Natural killer cell (primary cell): ENCODE measurements at regions of chr1 and their contacts with region 1.

Region 1: GRCh38 chr1:52141513-52142219 is at the start of gene ZFYVE9:
- DNase-seq: peak; percentile 72 to 88
- ATAC-seq: peak; percentile 78 to 89 (median 86)
- H3K4me3 ChIP-seq: peak within 1 kb of the TSS; percentile 16
- H3K4me3 Mint-ChIP-seq: peak within 1 kb of the TSS; percentile 91
- H3K27ac ChIP-seq: no peak within 1 kb of the TSS
- H3K27ac Mint-ChIP-seq: peak within 1 kb of the TSS in 1 of 2 donors; percentile 60
- H3K4me1 ChIP-seq: peaks cover 10% of the 10 kb centered on the region
- H3K4me1 Mint-ChIP-seq: peaks cover 29 to 30% of the 10 kb centered on the region in 2 donors
- H3K27me3 ChIP-seq: peaks cover 8% of the 10 kb centered on the region
- H3K27me3 Mint-ChIP-seq: peaks cover 13 to 23% of the 10 kb centered on the region in 2 donors
- CTCF ChIP-seq: peak; percentile 71
- total RNA-seq, gene ZFYVE9: 1.1 to 2.3 (median 1.8) TPM

Region 2: DNA sequence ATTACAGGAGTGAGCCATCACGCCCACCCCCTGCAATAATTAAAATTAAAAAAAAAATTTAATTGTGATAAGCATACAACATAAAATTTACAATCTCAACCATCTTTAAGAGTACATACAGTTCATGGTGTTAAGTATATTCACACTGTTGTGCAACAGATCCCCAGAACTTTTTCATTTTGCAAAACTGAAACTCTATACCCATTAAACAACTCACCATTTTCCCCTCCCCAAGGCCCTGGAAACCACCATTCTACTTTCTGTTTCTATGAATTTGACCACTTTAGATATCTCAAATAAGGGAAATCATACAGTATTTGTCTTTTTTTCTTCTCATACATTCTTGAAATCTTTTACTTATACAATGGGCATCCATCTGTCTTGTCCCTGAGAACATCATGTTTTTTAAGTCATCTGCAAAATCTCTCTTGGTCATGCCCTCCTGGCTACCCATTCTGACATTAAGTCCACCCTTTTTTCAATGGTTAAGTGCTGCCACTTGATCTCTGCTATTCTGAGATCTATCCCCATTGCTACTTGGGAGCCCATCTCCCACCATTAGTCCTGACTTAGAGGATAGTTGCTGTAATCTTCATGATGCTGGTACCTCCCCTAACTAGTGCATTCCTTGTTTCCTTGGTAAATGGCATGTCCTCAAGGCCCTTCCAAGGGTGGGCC is 39.2 kb before region 1 on chr1:
- intact Hi-C with region 1: no loop called
- DNase-seq: no peak
- ATAC-seq: peak in 2 of 3 donors; percentile 41 to 50
- H3K4me3 ChIP-seq: no peak overlapping the region
- H3K4me3 Mint-ChIP-seq: no peak overlapping the region
- H3K27ac ChIP-seq: no peak overlapping the region
- H3K27ac Mint-ChIP-seq: no peak overlapping the region
- H3K4me1 ChIP-seq: no peaks in the 10 kb centered on the region
- H3K4me1 Mint-ChIP-seq: peaks cover 7 to 8% of the 10 kb centered on the region in 2 donors
- H3K27me3 ChIP-seq: no peaks in the 10 kb centered on the region
- H3K27me3 Mint-ChIP-seq: no peaks in the 10 kb centered on the region
- CTCF ChIP-seq: no peak

Region 3: GRCh38 chr1:52159033-52159789 is 17.5 kb after region 1 on chr1:
- intact Hi-C with region 1: no loop called
- DNase-seq: no peak
- ATAC-seq: no peak
- H3K4me3 ChIP-seq: no peak overlapping the region
- H3K4me3 Mint-ChIP-seq: no peak overlapping the region
- H3K27ac ChIP-seq: no peak overlapping the region
- H3K27ac Mint-ChIP-seq: no peak overlapping the region
- H3K4me1 ChIP-seq: no peaks in the 10 kb centered on the region
- H3K4me1 Mint-ChIP-seq: no peaks in the 10 kb centered on the region
- H3K27me3 ChIP-seq: no peaks in the 10 kb centered on the region
- H3K27me3 Mint-ChIP-seq: peaks cover 2 to 13% of the 10 kb centered on the region in 2 donors
- CTCF ChIP-seq: no peak

Region 4: DNA sequence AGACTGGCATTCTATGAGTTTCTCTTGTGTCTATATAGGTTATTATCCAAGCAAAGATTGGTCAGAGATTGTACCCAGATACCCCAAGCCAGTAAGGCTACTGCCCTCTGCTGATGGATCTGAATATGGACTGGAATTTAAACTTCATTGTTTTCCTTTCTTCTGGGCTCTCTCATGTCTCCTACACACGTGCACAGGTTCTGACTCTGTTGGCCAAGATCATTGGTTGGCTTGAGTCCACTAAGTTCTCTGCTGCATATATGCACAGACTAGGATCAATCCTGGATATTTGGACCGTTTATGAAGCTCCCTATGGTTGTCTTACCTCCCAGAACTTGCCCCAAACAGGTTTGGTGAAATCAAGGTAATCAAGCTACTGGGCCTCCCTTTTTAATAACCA is 154.7 kb after region 1 on chr1:
- intact Hi-C with region 1: loop called (anchors 1 kb)
- DNase-seq: peak in 1 of 2 donors; percentile 55
- ATAC-seq: peak in 2 of 3 donors; percentile 48 to 55
- H3K4me3 ChIP-seq: no peak overlapping the region
- H3K4me3 Mint-ChIP-seq: no peak overlapping the region
- H3K27ac ChIP-seq: no peak overlapping the region
- H3K27ac Mint-ChIP-seq: no peak overlapping the region
- H3K4me1 ChIP-seq: no peaks in the 10 kb centered on the region
- H3K4me1 Mint-ChIP-seq: no peaks in the 10 kb centered on the region
- H3K27me3 ChIP-seq: no peaks in the 10 kb centered on the region
- H3K27me3 Mint-ChIP-seq: no peaks in the 10 kb centered on the region
- CTCF ChIP-seq: peak; percentile 48